Aorta (tissue), 5 donors: ENCODE measurements at regions of chr15 and their contacts with region 1.

Region 1: GRCh38 chr15:91852741-91853510 is 582 bp upstream of the SLCO3A1 start:
- DNase-seq: peak; percentile 90
- ATAC-seq: peak; percentile 90
- H3K4me3 ChIP-seq: peak overlapping the region; percentile 93 to 96
- H3K27ac ChIP-seq: peak overlapping the region; percentile 73 to 97
- H3K4me1 ChIP-seq: no peaks in the 10 kb centered on the region
- H3K27me3 ChIP-seq: no peaks in the 10 kb centered on the region

Region 2: DNA sequence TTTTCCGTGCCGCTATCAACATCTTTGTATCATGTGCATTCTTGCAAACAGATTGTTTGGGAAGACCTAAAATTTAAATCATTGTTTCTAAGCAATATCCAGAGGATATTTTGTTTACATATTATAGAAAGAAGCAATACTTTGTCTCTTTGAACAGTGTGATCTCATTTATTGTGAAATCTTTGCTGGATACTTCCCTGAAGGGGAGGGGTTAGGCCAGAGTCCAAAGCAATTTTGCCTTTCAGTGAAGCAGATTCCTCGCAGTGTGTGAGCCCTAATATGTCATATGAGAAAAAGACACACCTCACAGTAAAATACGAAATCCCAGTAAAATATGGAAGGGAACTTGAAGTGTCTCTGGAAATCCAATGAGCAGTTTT is 158.1 kb before region 1 on chr15:
- intact Hi-C with region 1: loop called in 1 of 2 experiments (anchors 5 kb)
- DNase-seq: peak in 1 of 2 donors; percentile 62
- ATAC-seq: peak; percentile 89
- H3K4me3 ChIP-seq: no peak overlapping the region
- H3K27ac ChIP-seq: peak overlapping the region in 1 of 2 donors; percentile 96
- H3K4me1 ChIP-seq: no peaks in the 10 kb centered on the region
- H3K27me3 ChIP-seq: no peaks in the 10 kb centered on the region

Region 3: DNA sequence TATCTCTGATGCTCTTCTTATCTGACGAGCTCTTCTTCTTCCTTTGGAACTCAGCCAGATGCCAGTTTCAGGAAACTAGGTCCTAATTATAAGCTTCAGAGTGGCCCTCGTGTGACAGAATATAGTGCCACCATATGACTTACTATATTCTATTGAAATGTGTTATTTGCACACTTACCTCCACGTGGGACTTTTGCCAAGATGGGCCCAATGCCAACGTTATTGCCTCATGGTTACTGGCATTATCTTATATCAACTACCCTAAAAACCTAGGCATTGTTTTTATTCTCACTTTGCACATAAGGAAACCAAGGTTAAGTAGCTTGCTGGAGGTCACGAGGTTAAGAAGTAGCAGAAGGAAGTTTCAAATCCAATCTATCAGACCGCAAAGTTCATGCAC is 70.7 kb before region 1 on chr15:
- intact Hi-C with region 1: no loop called
- DNase-seq: no peak
- ATAC-seq: no peak
- H3K4me3 ChIP-seq: no peak overlapping the region
- H3K27ac ChIP-seq: no peak overlapping the region
- H3K4me1 ChIP-seq: no peaks in the 10 kb centered on the region
- H3K27me3 ChIP-seq: no peaks in the 10 kb centered on the region

Region 4: GRCh38 chr15:91921188-91921842 is 68.4 kb after region 1 on chr15:
- intact Hi-C with region 1: loop called in 1 of 2 experiments (anchors 5 kb)
- DNase-seq: no peak
- ATAC-seq: no peak
- H3K4me3 ChIP-seq: no peak overlapping the region
- H3K27ac ChIP-seq: no peak overlapping the region
- H3K4me1 ChIP-seq: peaks cover 0 to 12% of the 10 kb centered on the region in 2 donors
- H3K27me3 ChIP-seq: no peaks in the 10 kb centered on the region

Region 5: DNA sequence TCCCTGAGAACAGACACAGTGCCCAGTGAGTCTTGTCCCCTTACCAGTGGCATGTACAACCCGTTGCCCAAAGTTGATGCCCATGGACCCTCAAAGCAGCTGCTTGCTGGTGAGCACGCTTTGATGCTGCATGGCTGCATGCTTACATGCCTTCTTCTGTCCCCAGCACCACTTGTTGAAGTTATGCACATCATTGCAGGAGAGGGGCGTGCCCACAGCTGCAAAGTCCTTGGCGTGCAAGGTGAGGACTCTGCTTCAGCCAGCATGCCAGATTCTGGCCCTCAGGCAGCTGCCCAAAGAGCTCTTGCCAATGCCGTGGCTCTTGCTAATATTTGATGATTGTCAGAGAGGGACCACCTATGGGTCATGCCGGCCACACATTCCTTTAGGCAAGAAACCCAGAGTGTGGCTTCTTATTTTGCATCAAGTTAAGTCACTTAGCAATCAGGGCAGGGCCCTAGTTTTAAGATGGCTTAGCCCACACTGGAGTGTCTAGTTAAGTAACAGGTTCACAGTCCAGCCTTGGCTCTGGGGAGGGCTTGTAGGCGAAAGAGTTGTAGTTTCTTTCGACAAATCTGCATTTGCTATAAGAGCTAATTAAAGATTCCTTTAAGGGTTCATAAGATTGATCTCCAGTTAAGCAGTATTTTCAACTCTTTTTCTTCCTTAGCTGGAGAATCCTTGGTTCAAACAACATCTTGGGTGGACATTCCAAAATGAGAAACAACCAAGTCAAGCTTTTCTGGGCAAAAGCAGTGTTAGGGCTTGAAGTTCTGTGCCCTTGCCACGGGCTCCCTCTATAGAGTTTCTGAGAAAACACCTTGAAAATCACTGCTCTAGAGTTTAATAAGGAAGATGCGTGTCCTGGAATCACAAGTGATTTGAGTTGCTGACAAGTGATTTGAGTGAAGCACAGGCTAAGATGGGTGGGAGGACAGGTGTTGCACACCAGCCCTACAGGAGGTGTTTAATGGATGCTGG is 129.2 kb after region 1 on chr15:
- intact Hi-C with region 1: loop called (anchors 5 kb)
- DNase-seq: no peak
- ATAC-seq: no peak
- H3K4me3 ChIP-seq: no peak overlapping the region
- H3K27ac ChIP-seq: peak overlapping the region in 1 of 2 donors; percentile 35
- H3K4me1 ChIP-seq: peaks cover 2 to 11% of the 10 kb centered on the region in 2 donors
- H3K27me3 ChIP-seq: no peaks in the 10 kb centered on the region

Region 6: GRCh38 chr15:92077353-92078085 is 224.6 kb after region 1 on chr15:
- intact Hi-C with region 1: loop called (anchors 2 to 5 kb)
- DNase-seq: peak; percentile 80 to 85
- ATAC-seq: peak; percentile 68
- H3K4me3 ChIP-seq: no peak overlapping the region
- H3K27ac ChIP-seq: no peak overlapping the region
- H3K4me1 ChIP-seq: no peaks in the 10 kb centered on the region
- H3K27me3 ChIP-seq: no peaks in the 10 kb centered on the region